Posterior cingulate gyrus (tissue), 11 donors: ENCODE measurements at regions of chr18 and their contacts with region 1.

Region 1: DNA sequence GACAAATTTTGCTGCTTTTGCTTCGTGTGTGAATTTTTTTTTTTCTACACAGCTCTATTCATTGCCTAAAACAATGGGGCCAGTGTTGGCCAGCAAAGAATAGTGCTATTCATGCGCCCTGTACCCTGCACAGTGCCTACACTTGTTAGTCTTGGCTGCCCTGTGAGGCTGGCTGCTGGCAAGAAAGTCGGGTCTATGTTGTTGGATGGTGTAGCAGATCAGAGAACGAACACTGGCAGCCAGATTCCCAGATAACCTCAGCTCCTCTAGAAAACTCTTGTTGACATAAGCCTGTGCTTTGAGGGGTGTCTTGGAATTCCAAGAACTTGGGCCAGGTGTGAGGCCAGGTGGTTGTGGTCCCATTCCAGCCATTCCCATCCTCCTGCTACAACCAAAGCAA is 455.7 kb upstream of the TCF4 start:
- DNase-seq: peak; percentile 68 to 98 (median 86)

Region 2: GRCh38 chr18:55869556-55870501 is 173.8 kb before region 1 on chr18:
- intact Hi-C with region 1: loop called (anchors 5 kb)
- DNase-seq: no peak

Region 3: GRCh38 chr18:55998071-55998522 is 45.6 kb before region 1 on chr18:
- intact Hi-C with region 1: loop called (anchors 5 kb)
- DNase-seq: peak; percentile 48 to 97 (median 67)

Region 4: DNA sequence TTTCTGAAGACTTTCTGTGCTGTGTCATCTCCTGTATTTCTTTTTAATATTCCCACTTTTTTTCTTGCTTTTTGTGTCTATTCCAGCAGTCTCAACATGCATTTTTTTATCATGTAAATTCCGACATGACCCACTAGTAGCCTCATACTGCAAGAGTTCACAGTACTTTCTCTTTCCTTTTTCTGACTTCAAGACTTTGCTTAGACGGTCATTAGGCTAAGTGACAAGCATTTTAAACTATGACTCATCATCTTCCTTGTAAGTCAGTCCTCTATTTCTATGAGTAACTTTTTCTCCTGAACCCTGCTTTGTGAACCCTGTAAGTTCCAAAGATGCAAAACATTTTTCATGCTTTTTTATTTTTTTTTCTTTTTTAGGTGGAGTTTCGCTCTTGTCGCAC is 213.5 kb after region 1 on chr18:
- intact Hi-C with region 1: no loop called
- DNase-seq: no peak

Region 5: GRCh38 chr18:56382541-56382940 is 338.9 kb after region 1 on chr18:
- intact Hi-C with region 1: loop called (anchors 10 kb)
- DNase-seq: peak in 7 of 10 donors; percentile 16 to 79 (median 52)